ENCODE measurements at regions of chrX and their contacts with region 1.

Region 1: GRCh38 chrX:68695206-68695846 is 47.9 kb downstream of the STARD8 start:
- DNase-seq: peak in 1 of 2 experiments; percentile 5
- H3K4me3 ChIP-seq: no peak overlapping the region
- H3K27ac ChIP-seq: no peak overlapping the region
- H3K4me1 ChIP-seq: no peaks in the 10 kb centered on the region
- H3K27me3 ChIP-seq: no peaks in the 10 kb centered on the region
- CTCF ChIP-seq: no peak

Region 2: DNA sequence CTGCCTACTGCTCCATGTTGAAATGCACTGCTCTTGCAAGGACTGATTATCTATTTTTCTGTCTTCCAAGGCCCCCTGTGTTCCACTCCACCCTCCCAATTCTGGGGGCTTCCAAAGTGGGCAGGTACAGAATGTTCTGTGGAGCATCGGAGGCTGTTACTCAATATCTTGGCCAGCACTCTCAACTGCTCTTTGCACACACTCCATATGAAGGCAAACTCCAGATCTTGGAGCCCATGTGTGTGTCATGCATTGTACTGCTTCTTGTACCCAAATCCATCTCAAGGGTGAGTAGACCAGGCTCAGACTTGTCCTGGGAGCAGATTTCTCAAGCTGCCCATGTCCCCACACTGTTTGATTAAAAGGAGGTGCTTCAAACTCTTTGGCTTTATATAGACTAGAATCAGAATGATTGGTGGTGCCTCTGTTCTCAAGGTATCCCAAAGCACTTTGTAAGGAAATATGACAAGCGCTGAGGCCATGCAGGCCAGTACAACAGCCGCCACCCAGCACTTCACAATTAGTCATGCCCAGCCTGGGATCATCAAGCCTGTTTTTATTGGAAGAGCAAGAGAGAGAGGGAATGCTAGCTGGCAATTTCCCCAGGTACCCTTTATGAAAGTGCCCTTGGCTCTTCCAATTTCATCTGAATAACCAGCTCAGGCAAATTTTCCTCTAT is 1107.2 kb before region 1 on chrX:
- CTCF ChIA-PET with region 1: no interaction called
- POLR2A ChIA-PET with region 1: no interaction called
- intact Hi-C with region 1: no loop called
- DNase-seq: no peak
- H3K4me3 ChIP-seq: no peak overlapping the region
- H3K27ac ChIP-seq: no peak overlapping the region
- H3K4me1 ChIP-seq: no peaks in the 10 kb centered on the region
- H3K27me3 ChIP-seq: no peaks in the 10 kb centered on the region
- CTCF ChIP-seq: no peak

Region 3: GRCh38 chrX:68292471-68292870 is 402.9 kb before region 1 on chrX:
- CTCF ChIA-PET with region 1: no interaction called
- POLR2A ChIA-PET with region 1: interaction called, 10 read pairs
- intact Hi-C with region 1: no loop called
- DNase-seq: peak in 1 of 2 experiments; percentile 46
- H3K4me3 ChIP-seq: no peak overlapping the region
- H3K27ac ChIP-seq: no peak overlapping the region
- H3K4me1 ChIP-seq: no peaks in the 10 kb centered on the region
- H3K27me3 ChIP-seq: no peaks in the 10 kb centered on the region
- CTCF ChIP-seq: no peak

Region 4: DNA sequence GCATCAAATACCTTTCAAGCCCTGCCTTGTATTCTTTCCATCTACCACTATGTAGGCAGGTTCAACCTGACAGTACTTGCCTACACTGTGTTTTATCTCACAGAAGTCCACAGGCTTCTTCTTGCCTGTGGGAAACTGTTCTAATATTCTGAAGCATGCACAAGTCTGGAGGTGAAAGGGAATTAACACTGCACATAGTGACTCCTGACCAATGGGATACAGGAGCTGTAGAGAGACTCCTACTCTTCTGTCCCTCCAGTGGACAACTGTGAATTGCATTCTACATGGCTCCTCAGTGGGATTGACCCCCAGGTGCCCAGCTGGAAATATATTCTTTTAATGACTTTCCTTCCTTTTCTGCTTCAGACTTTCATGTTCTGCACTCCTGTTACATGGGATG is 204.7 kb before region 1 on chrX:
- CTCF ChIA-PET with region 1: no interaction called
- POLR2A ChIA-PET with region 1: no interaction called
- intact Hi-C with region 1: no loop called
- DNase-seq: peak in 1 of 2 experiments; percentile 37
- H3K4me3 ChIP-seq: no peak overlapping the region
- H3K27ac ChIP-seq: no peak overlapping the region
- H3K4me1 ChIP-seq: no peaks in the 10 kb centered on the region
- H3K27me3 ChIP-seq: no peaks in the 10 kb centered on the region
- CTCF ChIP-seq: peak; percentile 61; the same call in 1 of the 2 replicates

Region 5: DNA sequence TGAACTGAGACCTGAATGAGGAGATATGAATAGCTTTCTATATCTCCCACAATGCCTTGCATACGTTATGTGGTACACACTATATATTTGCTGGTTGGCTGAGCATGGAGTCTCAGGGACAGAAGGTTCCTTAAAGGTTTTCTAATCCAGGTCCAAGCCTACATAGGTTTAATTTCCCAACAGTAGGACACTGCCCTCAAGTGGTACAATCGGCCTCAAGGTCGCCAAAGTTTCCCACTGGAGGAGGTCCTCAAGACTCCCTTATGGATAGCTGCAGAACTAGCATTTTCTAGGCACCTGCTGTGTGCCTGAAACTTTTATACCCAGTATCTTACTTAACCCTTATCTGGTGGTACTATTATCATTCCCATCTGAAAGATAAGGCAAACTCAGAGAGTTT is 112.5 kb after region 1 on chrX:
- CTCF ChIA-PET with region 1: no interaction called
- POLR2A ChIA-PET with region 1: no interaction called
- intact Hi-C with region 1: no loop called
- DNase-seq: peak in 1 of 2 experiments; percentile 7
- H3K4me3 ChIP-seq: no peak overlapping the region
- H3K27ac ChIP-seq: no peak overlapping the region
- H3K4me1 ChIP-seq: no peaks in the 10 kb centered on the region
- H3K27me3 ChIP-seq: no peaks in the 10 kb centered on the region
- CTCF ChIP-seq: peak; percentile 31; the same call in 1 of the 2 replicates

Region 6: GRCh38 chrX:68929332-68930150 is 234.2 kb after region 1 on chrX:
- CTCF ChIA-PET with region 1: no interaction called
- POLR2A ChIA-PET with region 1: no interaction called
- intact Hi-C with region 1: no loop called
- DNase-seq: peak; percentile 64 to 77
- H3K4me3 ChIP-seq: no peak overlapping the region
- H3K27ac ChIP-seq: no peak overlapping the region
- H3K4me1 ChIP-seq: peaks cover 26% of the 10 kb centered on the region
- H3K27me3 ChIP-seq: no peaks in the 10 kb centered on the region
- CTCF ChIP-seq: no peak

Measured in PC-9 (cell line).